ENCODE measurements at regions of chr22 and their contacts with region 1.

Region 1: GRCh38 chr22:42863349-42863961 is 6.4 kb upstream of the ARFGAP3 start:
- DNase-seq: no peak
- ATAC-seq: peak in 1 of 2 donors; percentile 50
- H3K4me3 ChIP-seq: no peak overlapping the region
- H3K27ac ChIP-seq: peak overlapping the region in 3 of 4 donors; percentile 9 to 67 (median 19)
- H3K4me1 ChIP-seq: peaks cover 12 to 18% of the 10 kb centered on the region in 2 donors
- H3K27me3 ChIP-seq: no peaks in the 10 kb centered on the region
- CTCF ChIP-seq: no peak
- POLR2A ChIP-seq: no peak

Region 2: GRCh38 chr22:42901790-42902508 is 38.5 kb after region 1 on chr22:
- in situ Hi-C with region 1: no loop called
- intact Hi-C with region 1: loop called (anchors 1 kb)
- DNase-seq: peak; percentile 74 to 85
- ATAC-seq: peak; percentile 64 to 81
- H3K4me3 ChIP-seq: no peak overlapping the region
- H3K27ac ChIP-seq: peak overlapping the region; percentile 87 to 94 (median 89)
- H3K4me1 ChIP-seq: peaks cover 58 to 66% of the 10 kb centered on the region in 2 donors
- H3K27me3 ChIP-seq: no peaks in the 10 kb centered on the region
- CTCF ChIP-seq: peak in 3 of 5 experiments; percentile 15 to 42 (median 40)
- POLR2A ChIP-seq: no peak

Region 3: GRCh38 chr22:42967933-42968332 is 104.5 kb after region 1 on chr22:
- in situ Hi-C with region 1: loop called in 1 of 4 experiments (anchors 25 kb)
- intact Hi-C with region 1: loop called (anchors 2 kb)
- DNase-seq: peak; percentile 72 to 74
- ATAC-seq: peak; percentile 60 to 69
- H3K4me3 ChIP-seq: no peak overlapping the region
- H3K27ac ChIP-seq: peak overlapping the region; percentile 7 to 77 (median 50)
- H3K4me1 ChIP-seq: peaks cover 26 to 44% of the 10 kb centered on the region in 2 donors
- H3K27me3 ChIP-seq: no peaks in the 10 kb centered on the region
- CTCF ChIP-seq: peak in 4 of 5 experiments; percentile 28 to 52 (median 45)
- POLR2A ChIP-seq: no peak

Region 4: DNA sequence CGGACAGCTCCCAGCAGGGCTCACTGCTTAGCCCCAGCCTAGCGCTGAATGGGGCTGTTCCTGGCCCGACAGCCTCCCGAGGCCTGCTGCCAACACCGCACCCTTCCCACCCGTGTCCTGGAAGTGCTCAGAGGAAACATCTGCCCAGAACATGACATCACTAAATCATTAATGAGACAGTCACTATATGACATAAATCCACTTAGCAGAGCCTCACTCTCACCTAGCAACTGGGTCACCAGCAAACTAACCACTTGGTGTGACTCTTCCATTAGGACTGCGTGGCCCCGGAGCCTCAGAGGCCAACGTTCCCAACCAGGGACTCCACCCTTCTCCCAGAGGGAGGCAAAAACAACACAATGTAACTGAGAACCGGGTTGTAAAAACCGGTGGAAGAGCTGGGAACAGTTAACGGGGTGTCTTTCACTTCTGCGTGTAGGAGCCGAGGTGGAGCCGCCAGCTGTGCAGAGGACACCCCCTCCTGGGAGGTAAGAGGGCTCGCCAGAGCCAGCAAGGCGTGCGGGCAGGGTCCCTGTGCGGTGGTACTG is 172.9 kb after region 1 on chr22:
- in situ Hi-C with region 1: loop called in 3 of 4 experiments (anchors 5 to 25 kb)
- intact Hi-C with region 1: loop called (anchors 2 kb)
- DNase-seq: peak in 1 of 2 donors; percentile 28
- ATAC-seq: peak; percentile 64 to 74
- H3K4me3 ChIP-seq: no peak overlapping the region
- H3K27ac ChIP-seq: peak overlapping the region in 3 of 4 donors; percentile 7 to 51 (median 51)
- H3K4me1 ChIP-seq: no peaks in the 10 kb centered on the region
- H3K27me3 ChIP-seq: no peaks in the 10 kb centered on the region
- CTCF ChIP-seq: no peak
- POLR2A ChIP-seq: no peak

Region 5: DNA sequence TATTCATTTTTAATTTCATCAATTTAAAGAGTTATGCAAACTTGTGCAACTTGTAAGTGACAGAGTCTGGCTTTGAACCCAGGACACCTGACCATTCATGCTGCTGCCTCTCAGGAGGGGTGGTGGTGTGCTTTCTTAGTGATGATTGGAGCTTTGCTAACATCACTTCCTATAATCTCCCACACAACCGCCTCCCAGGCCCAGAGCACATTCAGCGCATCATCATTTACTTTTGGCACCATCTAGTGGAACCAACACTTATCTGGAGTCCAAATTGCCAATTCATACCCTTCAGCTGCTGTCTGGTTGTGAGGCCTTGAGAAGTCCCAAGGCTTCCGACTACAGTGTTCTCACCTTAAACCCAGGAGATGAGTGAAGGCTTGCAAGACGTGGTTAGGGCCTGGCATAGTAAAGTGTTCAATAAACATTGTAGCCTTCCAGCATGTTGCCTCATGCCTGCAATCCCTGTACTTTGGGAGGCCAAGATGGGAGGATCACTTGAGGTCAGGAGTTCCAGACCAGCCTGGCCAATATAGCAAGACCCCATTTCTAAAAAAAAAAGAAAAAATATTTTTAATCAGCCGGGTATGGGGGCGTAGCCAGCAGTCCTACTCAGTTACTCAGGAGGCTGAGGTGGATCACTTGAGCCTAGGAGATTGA is 226.8 kb after region 1 on chr22:
- in situ Hi-C with region 1: no loop called
- intact Hi-C with region 1: loop called (anchors 2 kb)
- DNase-seq: peak; percentile 23 to 33
- ATAC-seq: peak; percentile 45 to 57
- H3K4me3 ChIP-seq: peak overlapping the region in 1 of 4 donors; percentile 94
- H3K27ac ChIP-seq: no peak overlapping the region
- H3K4me1 ChIP-seq: peaks cover 4 to 7% of the 10 kb centered on the region in 2 donors
- H3K27me3 ChIP-seq: no peaks in the 10 kb centered on the region
- CTCF ChIP-seq: peak in 1 of 5 experiments; percentile 37
- POLR2A ChIP-seq: no peak

Measured in gastrocnemius medialis (tissue), 4 donors.